Activated CD4-positive, alpha-beta memory T cell treated with anti-CD3 and anti-CD28 coated beads for 36 hours (primary cell): ENCODE measurements at regions of chr15 and their contacts with region 1.

Region 1: DNA sequence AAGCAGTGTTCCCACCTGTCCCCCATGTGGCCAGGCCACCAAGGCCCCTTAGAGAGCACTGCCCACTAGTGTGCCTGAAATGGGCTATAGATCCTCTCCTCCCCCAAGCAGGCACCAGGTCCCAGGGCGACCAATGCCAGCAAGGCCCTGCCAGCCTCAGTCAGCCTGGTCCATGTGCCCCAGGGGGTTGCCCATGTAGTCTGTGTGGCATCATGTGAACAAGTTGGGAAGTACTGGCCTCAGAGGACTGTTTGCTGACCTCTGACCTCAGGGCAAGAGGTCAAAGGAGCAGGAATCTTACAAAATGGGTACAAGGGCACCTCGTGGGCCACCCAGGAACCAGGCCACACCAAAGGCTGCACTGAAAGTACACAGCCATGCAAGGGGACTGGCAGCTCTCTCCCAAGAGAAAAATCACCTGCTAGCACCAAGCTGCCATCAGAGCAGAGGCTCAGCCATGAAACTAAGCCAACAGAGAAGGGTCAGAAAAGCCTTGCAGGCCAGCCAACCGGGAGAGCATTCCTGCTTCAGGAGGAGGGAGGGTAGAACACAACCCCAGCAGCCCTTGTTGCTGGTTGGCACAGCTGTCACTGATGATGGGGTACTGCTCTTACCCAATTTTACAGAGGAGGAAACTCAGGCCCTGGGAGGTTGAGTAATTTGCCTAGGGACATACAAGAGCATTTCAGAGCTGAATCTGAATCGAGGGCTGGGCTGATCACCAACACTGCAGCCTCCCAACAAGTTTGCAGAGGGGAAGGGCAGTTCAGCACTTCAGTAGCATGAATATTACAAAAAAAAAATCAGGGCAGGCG is 5.2 kb upstream of the FURIN start:
- DNase-seq: no peak
- H3K4me3 Mint-ChIP-seq: no peak overlapping the region
- H3K27ac Mint-ChIP-seq: peak overlapping the region; percentile 87
- H3K4me1 Mint-ChIP-seq: peaks cover 40% of the 10 kb centered on the region
- H3K27me3 Mint-ChIP-seq: no peaks in the 10 kb centered on the region

Region 2: DNA sequence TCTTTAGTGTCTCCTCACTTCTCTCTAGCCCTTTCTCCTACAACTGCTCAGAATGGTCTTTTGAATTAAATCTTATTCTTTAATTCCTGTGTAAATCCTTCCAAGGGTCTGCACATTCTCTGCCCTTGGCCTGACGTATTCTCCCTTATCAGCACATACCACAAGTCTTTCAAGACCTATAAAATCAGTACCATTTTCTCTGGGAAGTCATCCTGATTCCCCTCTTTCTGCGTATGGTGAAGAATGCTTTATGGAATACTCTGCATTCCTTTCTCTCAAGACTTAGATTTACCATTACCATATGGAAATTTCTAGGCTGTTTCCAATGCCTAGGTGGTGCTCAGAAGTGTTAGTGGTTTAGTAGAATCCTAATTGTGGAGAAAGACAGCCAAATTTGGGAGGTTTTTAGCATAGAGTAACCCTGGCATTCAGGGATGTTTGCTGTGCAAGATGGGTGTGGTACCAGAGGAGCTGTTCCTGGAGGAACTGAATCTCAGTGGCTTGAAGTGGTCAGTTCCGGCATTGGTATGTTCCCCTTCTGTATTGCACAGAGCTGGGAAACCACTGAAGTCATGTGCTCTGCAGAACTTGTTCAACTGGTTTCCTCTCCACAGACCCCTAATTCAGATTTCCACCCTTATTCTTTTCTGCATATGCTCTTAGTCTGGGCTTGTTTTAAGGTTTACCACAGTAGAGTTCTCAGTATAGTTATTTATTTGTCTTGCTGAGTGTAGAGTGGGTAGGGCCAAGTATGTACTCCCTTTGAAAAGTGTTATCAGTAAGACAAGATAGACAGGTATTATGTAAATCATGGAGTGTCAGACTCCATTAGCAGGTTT is 450.6 kb before region 1 on chr15:
- CTCF ChIA-PET with region 1: no interaction called
- POLR2A ChIA-PET with region 1: no interaction called
- intact Hi-C with region 1: loop called (anchors 10 kb)
- DNase-seq: no peak
- H3K4me3 Mint-ChIP-seq: no peak overlapping the region
- H3K27ac Mint-ChIP-seq: peak overlapping the region; percentile 23
- H3K4me1 Mint-ChIP-seq: peaks cover 79% of the 10 kb centered on the region
- H3K27me3 Mint-ChIP-seq: no peaks in the 10 kb centered on the region

Region 3: DNA sequence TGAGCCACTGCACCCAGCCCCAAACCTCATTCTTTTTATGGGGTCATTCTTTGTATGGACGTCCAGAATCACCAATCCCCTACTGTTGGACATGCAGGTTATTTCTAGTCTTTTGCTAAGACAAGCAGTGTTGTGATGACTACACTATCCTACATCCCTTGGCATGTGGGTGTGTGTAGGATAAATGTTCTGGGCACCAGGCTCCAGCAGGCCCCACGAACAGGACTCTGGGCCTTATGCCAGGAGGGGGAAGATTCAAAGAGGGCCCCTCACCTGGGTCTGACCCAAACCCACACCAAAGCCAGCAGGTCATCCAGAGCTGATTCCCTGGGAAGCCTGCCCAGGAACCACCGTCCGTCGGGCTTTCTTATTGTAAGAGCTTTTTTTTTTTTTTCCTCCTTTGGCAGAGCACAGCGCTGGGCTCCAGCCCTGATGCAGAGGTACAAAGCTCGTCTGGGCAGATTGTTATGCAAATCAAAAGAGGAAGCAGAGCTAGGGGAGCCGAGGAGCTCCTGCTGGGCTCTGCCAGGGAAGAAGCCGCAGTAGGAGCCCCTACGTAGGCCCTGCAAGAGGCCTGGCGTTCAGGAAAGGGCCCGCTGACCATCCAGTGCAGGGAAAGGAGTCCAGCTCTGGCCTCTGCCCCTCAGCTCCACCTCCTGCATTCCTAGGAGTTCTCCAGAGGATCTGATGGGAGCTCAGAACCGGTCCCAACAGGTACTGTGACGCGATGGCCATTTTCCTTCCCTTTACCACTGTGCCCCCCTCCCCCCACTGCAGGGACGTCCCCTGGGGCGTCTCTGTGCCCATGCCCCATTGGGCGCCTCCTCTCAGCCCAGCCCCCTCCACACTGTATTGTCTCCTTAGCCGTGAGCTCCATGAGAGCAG is 23.7 kb before region 1 on chr15:
- CTCF ChIA-PET with region 1: interaction called, 3 read pairs
- POLR2A ChIA-PET with region 1: interaction called, 10 read pairs
- intact Hi-C with region 1: no loop called
- DNase-seq: peak; percentile 61
- H3K4me3 Mint-ChIP-seq: peak overlapping the region; percentile 69
- H3K27ac Mint-ChIP-seq: peak overlapping the region; percentile 94
- H3K4me1 Mint-ChIP-seq: peaks cover 57% of the 10 kb centered on the region
- H3K27me3 Mint-ChIP-seq: no peaks in the 10 kb centered on the region

Region 4: DNA sequence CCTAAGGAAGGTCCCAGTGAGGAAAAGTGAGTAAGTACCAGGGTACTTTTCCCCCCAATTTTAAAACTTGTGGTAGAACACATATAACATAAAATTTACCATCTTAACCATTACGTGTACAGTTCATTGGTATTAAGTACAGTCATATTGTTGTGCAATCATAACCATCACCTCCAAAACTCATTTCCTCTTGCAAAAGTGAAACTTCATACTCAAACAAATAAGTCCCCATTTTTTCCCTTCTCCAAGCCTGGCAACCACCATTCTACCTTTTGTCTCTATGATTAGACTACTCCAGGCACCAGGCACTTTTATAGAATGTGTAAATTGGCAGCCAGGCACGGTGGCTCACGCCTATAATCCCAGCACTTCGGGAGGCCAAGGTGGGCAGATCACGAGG is 119.0 kb after region 1 on chr15:
- CTCF ChIA-PET with region 1: no interaction called
- POLR2A ChIA-PET with region 1: no interaction called
- intact Hi-C with region 1: no loop called
- DNase-seq: no peak
- H3K4me3 Mint-ChIP-seq: no peak overlapping the region
- H3K27ac Mint-ChIP-seq: no peak overlapping the region
- H3K4me1 Mint-ChIP-seq: peaks cover 18% of the 10 kb centered on the region
- H3K27me3 Mint-ChIP-seq: no peaks in the 10 kb centered on the region